ENCODE measurements at regions of chr4 and their contacts with region 1.

Region 1: DNA sequence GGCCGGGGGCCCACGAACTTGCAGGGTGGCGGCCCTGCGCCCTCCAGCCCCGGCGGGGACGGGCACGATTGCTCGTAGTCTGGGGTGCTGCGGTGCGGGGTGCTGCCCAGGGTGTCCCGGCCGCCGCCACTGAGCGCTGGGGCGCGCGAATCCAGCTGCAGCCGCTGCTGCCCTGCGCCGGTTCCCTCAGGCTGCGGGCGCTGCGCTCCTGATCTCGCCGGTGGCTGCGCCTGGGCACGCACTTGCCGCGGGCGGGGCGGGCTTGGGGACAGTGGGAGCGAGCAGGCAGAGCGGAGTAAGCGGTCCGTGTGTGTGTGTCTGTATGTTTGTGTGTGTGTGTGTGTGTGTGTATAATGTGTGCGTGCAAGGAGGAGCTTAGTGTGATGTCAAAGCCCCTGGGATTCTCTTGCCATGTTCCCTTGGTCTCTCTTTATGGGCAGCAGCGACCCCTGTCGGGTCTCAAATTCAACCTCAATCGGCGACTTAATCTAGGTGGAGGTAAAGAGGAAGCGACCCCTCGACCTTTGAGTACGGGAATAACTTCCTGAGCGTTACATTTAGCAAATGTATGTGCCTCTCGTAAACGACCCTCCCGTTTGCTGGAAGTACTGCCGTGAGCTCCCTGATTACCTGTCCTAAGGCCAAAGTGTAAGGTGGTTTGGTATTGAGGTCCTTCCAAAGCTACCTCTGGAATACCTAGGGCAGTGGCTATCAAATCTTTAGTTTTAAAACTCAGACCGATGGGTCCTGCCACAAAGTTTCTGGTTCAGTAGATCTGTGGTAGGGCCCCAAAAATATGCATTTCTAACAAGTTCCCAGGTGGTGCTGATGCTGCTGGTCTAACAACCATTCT is at the start of gene RNF150:
- DNase-seq: peak; percentile 78
- ATAC-seq: peak; percentile 69
- H3K4me3 Mint-ChIP-seq: peak within 1 kb of the TSS; percentile 83
- H3K27ac Mint-ChIP-seq: peak within 1 kb of the TSS; percentile 58; the same call in 1 of the 2 replicates
- H3K4me1 Mint-ChIP-seq: peaks cover 28% of the 10 kb centered on the region
- H3K27me3 Mint-ChIP-seq: peaks cover 26% of the 10 kb centered on the region
- CTCF ChIP-seq: peak; percentile 48; the same call in 1 of the 2 replicates
- total RNA-seq, gene RNF150: 5.9 to 7.4 TPM (median 7.0 TPM) in 3 replicates

Region 2: GRCh38 chr4:140884431-140885058 is 248.8 kb before region 1 on chr4:
- CTCF ChIA-PET with region 1: interaction called, 32 read pairs
- POLR2A ChIA-PET with region 1: no interaction called
- DNase-seq: peak; percentile 59
- ATAC-seq: peak; percentile 99
- H3K4me3 Mint-ChIP-seq: no peak overlapping the region
- H3K27ac Mint-ChIP-seq: no peak overlapping the region
- H3K4me1 Mint-ChIP-seq: 0 out of 2 replicates have a peak, but pooled peaks cover 5% of the 10 kb centered on the region
- H3K27me3 Mint-ChIP-seq: no peaks in the 10 kb centered on the region
- CTCF ChIP-seq: peak; percentile 45; the same call in 1 of the 2 replicates

Region 3: DNA sequence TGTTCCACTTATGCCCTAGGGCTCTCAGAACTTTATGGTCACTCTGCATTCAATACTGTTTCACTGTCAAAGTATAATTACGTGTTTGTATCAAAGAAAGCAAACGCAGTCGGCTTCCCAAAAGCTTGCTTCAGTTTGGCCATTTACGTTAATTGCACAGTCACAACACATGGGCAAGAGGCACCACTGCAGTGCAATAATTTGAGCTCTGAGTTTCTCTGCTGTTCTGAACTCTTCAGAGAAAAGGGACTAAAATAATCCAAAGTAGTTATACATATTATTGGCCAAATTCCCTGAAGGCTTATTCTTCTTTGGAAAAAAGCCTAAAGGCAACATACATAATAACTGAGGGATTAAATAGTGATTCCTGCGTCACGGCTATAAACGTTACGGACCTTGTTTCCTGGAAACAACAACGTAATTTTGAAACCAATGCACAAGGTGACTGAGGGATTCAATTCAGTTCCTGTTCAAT is 51.4 kb before region 1 on chr4:
- CTCF ChIA-PET with region 1: no interaction called
- POLR2A ChIA-PET with region 1: no interaction called
- DNase-seq: no peak
- ATAC-seq: no peak
- H3K4me3 Mint-ChIP-seq: no peak overlapping the region
- H3K27ac Mint-ChIP-seq: no peak overlapping the region
- H3K4me1 Mint-ChIP-seq: peaks cover 21% of the 10 kb centered on the region
- H3K27me3 Mint-ChIP-seq: no peaks in the 10 kb centered on the region
- CTCF ChIP-seq: no peak

Region 4: DNA sequence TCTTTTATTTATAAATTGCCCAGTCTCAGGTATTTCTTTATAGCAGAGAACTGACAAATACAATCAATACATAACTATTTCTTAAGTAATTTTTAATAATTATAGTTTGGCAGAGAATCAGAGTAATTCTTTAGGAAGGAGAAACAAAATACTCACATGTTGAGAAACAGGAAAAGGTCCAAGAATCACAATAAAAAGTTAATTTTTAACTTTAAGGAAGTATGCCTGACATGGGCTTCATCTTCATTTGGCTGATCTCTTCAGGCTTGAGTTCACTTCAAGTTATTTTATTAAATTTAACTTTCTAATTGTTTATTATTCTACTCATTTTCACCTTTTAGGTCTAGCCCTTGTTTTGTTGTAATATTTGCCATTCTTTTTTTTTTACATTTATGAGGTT is 36.0 kb after region 1 on chr4:
- CTCF ChIA-PET with region 1: no interaction called
- POLR2A ChIA-PET with region 1: no interaction called
- DNase-seq: no peak
- ATAC-seq: no peak
- H3K4me3 Mint-ChIP-seq: no peak overlapping the region
- H3K27ac Mint-ChIP-seq: no peak overlapping the region
- H3K4me1 Mint-ChIP-seq: no peaks in the 10 kb centered on the region
- H3K27me3 Mint-ChIP-seq: peaks cover 20% of the 10 kb centered on the region
- CTCF ChIP-seq: no peak